Gastrocnemius medialis (tissue), 4 donors: ENCODE measurements at regions of chr7 and their contacts with region 1.

Region 1: DNA sequence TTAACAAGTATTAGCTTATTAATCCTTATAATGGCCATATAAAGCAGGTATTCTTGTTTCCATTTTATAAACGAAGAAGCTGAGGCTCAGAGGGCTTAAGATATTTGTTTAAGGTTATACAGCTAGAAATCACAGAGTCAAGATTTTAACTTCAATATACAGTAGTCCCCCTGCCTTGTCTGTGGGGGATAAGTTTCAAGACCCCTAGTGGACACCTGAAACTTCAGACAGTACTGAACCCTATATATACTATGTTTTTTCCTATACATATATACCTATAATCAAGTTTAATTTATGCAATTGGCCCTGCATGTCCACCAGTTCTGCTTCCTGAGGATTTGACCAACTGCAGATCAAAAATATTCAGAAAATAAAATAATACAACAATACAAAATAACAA is 44.4 kb upstream of the STRIP2 start:
- DNase-seq: no peak
- ATAC-seq: no peak
- H3K4me3 ChIP-seq: no peak overlapping the region
- H3K27ac ChIP-seq: peak overlapping the region; percentile 92 to 97 (median 95)
- H3K4me1 ChIP-seq: peaks cover 39 to 42% of the 10 kb centered on the region in 2 donors
- H3K27me3 ChIP-seq: no peaks in the 10 kb centered on the region
- CTCF ChIP-seq: no peak
- POLR2A ChIP-seq: no peak

Region 2: GRCh38 chr7:129247087-129247486 is 142.7 kb before region 1 on chr7:
- in situ Hi-C with region 1: no loop called
- intact Hi-C with region 1: no loop called
- DNase-seq: no peak
- ATAC-seq: no peak
- H3K4me3 ChIP-seq: no peak overlapping the region
- H3K27ac ChIP-seq: no peak overlapping the region
- H3K4me1 ChIP-seq: peaks cover 3 to 4% of the 10 kb centered on the region in 2 donors
- H3K27me3 ChIP-seq: no peaks in the 10 kb centered on the region
- CTCF ChIP-seq: no peak
- POLR2A ChIP-seq: no peak

Region 3: DNA sequence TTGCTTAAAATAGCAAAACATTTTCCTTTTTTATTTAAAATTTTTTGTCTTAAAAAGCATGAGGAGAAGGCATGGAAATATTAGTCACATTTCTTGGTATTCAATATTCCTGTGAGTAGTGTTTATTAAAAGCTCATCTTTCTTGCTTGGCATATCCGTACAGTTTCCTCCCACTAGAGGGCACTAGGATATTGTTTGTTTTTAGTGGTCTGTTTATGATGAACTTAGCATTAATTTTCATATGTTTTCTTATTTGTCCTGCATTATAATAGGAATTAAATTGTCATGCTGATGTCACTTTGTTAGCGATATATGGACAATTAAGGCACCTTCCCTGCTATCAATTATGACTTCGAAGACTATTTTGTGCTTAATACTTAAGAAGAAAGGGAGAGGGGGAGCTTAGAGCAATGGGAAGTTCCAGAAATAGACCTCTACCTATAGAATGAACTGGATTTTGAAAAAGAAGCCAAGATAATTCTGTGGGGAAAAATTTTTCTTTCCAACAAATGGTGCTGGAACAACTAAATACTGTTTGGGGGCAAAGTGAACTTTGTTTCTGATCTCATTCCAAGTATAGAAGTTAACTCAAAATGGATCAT is 46.6 kb before region 1 on chr7:
- in situ Hi-C with region 1: no loop called
- intact Hi-C with region 1: loop called (anchors 5 kb)
- DNase-seq: peak in 1 of 2 donors; percentile 7
- ATAC-seq: peak; percentile 77 to 81
- H3K4me3 ChIP-seq: no peak overlapping the region
- H3K27ac ChIP-seq: peak overlapping the region; percentile 1 to 78 (median 52)
- H3K4me1 ChIP-seq: peaks cover 37 to 52% of the 10 kb centered on the region in 2 donors
- H3K27me3 ChIP-seq: no peaks in the 10 kb centered on the region
- CTCF ChIP-seq: peak; percentile 58 to 79 (median 65)
- POLR2A ChIP-seq: no peak

Region 4: DNA sequence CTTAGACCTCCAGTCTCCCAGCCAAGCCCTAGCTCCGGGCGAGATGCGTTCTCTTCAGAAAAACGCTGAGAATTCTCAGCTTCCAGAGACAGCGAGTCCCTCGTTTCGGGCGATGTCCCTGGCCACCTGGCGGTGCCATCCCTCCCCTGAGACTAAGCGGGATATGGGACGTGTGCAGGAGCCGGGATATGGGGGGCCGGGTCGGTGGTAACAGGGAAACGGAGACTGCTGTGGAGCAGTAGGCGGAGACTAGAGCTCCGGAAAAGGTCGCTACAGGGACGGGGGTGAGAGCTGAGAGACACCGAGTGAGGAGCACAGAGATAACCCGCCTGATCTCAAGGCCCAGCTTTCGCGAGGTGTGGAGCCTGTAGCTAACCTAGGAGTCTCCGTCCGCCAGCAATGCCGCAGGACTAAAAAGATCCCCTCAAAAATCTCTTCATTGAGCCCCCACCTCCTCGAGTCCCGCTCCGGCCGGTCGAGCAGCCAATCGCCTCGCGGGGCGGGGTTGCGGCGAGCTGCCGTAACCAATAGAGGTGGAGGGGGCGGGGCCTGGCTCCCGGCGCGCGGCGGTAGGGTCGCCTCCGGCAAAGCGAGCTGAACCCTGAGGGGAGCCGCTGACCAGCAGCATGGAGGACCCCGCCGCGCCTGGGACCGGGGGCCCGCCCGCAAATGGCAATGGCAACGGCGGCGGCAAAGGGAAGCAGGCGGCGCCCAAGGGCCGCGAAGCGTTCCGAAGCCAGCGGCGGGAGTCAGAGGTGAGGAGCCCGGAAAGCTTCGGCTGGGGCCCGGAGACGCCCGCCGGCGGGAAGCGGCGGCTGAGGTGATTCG is 44.2 kb after region 1 on chr7 and contains the start of gene STRIP2:
- in situ Hi-C with region 1: no loop called
- intact Hi-C with region 1: loop called (anchors 2 kb)
- DNase-seq: peak; percentile 89 to 91
- ATAC-seq: peak; percentile 85 to 91
- H3K4me3 ChIP-seq: peak within 1 kb of the TSS; percentile 74 to 89 (median 80)
- H3K27ac ChIP-seq: peak within 1 kb of the TSS; percentile 86 to 92 (median 88)
- H3K4me1 ChIP-seq: peaks cover 17 to 36% of the 10 kb centered on the region in 2 donors
- H3K27me3 ChIP-seq: no peaks in the 10 kb centered on the region
- CTCF ChIP-seq: peak in 1 of 5 experiments; percentile 26
- POLR2A ChIP-seq: peak; percentile 89 to 96
- total RNA-seq, gene STRIP2: 14.3 to 43.9 (median 24.7) TPM